ENCODE measurements at regions of chr6 and their contacts with region 1.

Region 1: DNA sequence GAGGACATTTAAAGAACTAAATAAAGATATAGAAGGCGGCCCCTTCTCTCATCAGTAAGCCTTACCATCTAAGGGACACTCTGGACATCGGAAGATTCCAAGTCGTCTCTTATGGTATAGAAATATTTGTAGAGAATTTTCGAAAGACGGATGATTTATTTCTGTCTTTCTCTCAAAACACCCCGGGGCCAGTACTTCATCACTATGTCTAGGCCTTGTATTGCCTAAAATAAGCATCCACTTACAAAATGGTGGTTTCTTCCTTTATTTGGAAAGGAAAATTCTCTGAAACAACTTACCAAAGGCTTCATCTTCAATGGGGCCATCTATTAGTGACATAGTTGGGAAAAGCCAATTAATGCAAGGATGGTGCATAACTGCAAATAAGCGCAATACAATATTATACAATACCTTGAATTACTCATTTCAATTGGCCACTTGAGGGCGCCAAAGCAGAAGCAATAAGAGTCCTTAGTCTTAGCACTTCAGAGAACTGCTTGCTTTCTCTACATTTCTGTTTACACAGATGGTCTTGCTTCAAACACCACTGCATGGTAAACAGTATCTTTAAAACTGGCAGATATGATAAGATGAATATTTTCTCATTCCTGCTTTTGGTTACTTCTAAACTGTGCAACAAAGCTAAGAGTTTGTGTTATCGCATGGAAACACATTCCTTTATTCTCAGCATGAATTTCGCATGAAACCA is 113.2 kb downstream of the VIP start:
- DNase-seq: peak; percentile 64 to 82
- H3K4me3 ChIP-seq: no peak overlapping the region
- CTCF ChIP-seq: no peak
- POLR2A ChIP-seq: no peak

Region 2: DNA sequence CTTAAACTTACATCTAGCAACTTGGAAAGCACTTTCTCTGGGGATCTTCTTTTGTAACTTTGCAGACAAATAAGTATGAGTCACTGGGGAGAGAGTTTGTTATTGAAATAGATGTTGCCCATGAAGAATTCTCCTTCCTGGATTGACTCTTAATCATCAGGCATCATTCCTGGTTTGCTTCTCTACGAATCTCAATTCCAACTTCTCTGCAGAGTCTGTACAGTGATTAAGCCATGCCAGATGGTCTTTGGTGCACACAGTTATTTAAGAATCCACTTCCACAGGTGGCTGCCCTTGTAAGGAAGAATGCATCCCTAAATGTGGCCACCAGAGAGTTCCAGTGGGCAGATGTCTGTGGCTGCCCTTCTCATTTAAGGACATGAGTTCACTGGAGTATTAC is 140.4 kb before region 1 on chr6:
- intact Hi-C with region 1: no loop called
- DNase-seq: no peak
- H3K4me3 ChIP-seq: no peak overlapping the region
- CTCF ChIP-seq: no peak
- POLR2A ChIP-seq: no peak

Region 3: DNA sequence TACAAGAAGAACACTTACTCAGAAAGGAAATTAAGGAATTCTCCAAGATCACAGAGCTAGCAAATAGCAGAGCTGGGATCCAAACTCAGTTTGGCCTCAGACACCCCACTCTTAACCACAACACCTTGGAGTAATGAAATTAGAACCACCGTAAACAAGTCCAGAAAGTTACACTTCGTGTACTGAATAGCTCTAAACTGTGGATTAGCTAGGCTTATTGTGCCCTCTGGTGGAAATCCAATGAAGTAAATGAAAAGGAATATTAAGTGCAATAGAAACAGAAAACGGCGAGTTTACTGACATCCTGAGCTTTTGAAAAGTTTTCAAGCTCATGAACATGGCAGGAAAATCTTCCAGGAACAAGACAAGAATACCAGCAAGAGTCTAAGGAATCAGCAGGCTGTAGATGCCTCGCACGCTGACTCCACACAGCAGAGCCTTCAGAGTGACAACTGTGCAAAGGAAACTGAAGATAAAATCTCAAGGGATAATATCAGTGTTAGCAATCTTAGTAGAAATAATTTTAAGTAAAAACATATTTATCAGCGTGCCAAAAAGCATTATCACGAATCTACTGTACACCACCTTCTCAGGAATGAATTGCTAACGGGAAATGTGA is 84.5 kb after region 1 on chr6:
- intact Hi-C with region 1: loop called (anchors 10 kb)
- DNase-seq: no peak
- H3K4me3 ChIP-seq: no peak overlapping the region
- CTCF ChIP-seq: no peak
- POLR2A ChIP-seq: no peak